H1 (cell line): ENCODE measurements at regions of chr3 and their contacts with region 1.

Region 1: GRCh38 chr3:194661374-194661773 is 10.6 kb downstream of the LSG1 start:
- DNase-seq: no peak
- H3K4me3 ChIP-seq: no peak overlapping the region
- H3K27ac ChIP-seq: no peak overlapping the region
- H3K4me1 ChIP-seq: no peaks in the 10 kb centered on the region
- H3K27me3 ChIP-seq: no peaks in the 10 kb centered on the region
- CTCF ChIP-seq: no peak
- EP300 ChIP-seq: no peak
- POLR2A ChIP-seq: no peak
- RAD21 ChIP-seq: no peak

Region 2: GRCh38 chr3:194640829-194641228 is 20.5 kb before region 1 on chr3:
- CTCF ChIA-PET with region 1: no interaction called
- POLR2A ChIA-PET with region 1: no interaction called
- DNase-seq: no peak
- H3K4me3 ChIP-seq: no peak overlapping the region
- H3K27ac ChIP-seq: no peak overlapping the region
- H3K4me1 ChIP-seq: no peaks in the 10 kb centered on the region
- H3K27me3 ChIP-seq: no peaks in the 10 kb centered on the region
- CTCF ChIP-seq: peak in 2 of 3 experiments; percentile 26 to 54; a peak in 3 of 4 replicates
- EP300 ChIP-seq: no peak
- POLR2A ChIP-seq: no peak
- RAD21 ChIP-seq: peak in 1 of 2 experiments; percentile 11; a peak in 1 of 4 replicates

Region 3: DNA sequence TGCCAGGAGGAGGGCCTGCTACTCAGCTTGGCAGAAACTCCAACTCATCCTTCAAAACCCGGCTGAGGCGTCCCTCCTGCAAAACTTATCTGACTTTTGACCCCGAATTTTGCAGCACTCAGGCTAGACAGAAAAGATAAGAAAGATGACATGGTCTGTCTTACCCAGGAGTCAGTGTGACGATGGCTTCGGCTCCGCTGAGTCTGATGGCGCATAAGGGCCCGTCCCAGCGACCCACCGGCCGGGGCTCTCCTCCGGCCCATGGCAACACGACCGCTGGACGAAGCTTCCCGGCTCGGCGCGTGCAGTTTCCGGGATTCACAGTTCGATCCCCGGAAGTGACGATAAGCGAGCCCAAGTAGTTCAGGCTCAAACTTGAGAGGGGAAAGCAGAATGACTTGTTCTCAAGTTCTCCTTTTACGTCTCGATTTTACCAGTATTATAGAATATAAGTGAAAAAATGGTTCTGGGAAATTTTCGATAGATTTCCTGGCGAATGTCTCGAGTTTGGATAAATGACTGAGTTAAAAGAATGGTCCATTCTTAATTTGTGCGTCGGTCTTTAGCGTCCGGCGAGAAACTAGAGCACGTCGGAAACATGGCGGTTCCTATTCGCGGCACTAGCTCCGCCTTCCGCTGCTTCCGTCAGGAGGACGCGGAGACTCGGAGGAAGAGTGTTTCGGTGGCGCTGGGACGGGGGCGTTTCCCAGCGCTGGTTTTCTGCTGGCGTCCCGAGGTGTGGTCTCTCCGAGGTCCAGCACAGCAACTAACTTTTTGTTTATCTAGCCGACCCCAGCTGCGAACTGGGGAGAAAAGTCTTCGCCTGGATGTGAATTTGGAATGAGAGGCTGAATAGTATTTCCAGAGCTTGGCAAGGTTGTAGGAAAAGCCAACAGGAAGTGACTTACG is 10.8 kb after region 1 on chr3 and contains the start of gene LSG1:
- CTCF ChIA-PET with region 1: interaction called, 44 read pairs
- POLR2A ChIA-PET with region 1: interaction called, 8 read pairs
- DNase-seq: peak; percentile 75 to 86
- H3K4me3 ChIP-seq: peak within 1 kb of the TSS; percentile 77 to 99 (median 93)
- H3K27ac ChIP-seq: peak within 1 kb of the TSS; percentile 94
- H3K4me1 ChIP-seq: peaks cover 0 to 4% (median under 1%) of the 10 kb centered on the region in 4 experiments; a peak in 4 of 7 replicates
- H3K27me3 ChIP-seq: peaks cover 0 to 2% (median 0%) of the 10 kb centered on the region in 4 experiments; a peak in 2 of 7 replicates
- CTCF ChIP-seq: no peak
- EP300 ChIP-seq: peak in 1 of 2 experiments; percentile 95; a peak in 2 of 3 replicates
- POLR2A ChIP-seq: peak; percentile 69 to 75
- RAD21 ChIP-seq: no peak
- total RNA-seq, gene LSG1: 47.6 and 49.9 TPM in 2 replicates

Region 4: GRCh38 chr3:194986208-194987043 is 325.1 kb after region 1 on chr3:
- CTCF ChIA-PET with region 1: no interaction called
- POLR2A ChIA-PET with region 1: no interaction called
- DNase-seq: peak in 1 of 2 experiments; percentile 37
- H3K4me3 ChIP-seq: no peak overlapping the region
- H3K27ac ChIP-seq: no peak overlapping the region
- H3K4me1 ChIP-seq: peaks cover 0 to 7% (median 5%) of the 10 kb centered on the region in 4 experiments; a peak in 3 of 7 replicates
- H3K27me3 ChIP-seq: peaks cover 0 to 7% (median 2%) of the 10 kb centered on the region in 4 experiments; a peak in 2 of 7 replicates
- CTCF ChIP-seq: no peak
- EP300 ChIP-seq: no peak
- POLR2A ChIP-seq: no peak
- RAD21 ChIP-seq: no peak